GM23248 (cell line): ENCODE measurements at regions of chr17 and their contacts with region 1.

Region 1: DNA sequence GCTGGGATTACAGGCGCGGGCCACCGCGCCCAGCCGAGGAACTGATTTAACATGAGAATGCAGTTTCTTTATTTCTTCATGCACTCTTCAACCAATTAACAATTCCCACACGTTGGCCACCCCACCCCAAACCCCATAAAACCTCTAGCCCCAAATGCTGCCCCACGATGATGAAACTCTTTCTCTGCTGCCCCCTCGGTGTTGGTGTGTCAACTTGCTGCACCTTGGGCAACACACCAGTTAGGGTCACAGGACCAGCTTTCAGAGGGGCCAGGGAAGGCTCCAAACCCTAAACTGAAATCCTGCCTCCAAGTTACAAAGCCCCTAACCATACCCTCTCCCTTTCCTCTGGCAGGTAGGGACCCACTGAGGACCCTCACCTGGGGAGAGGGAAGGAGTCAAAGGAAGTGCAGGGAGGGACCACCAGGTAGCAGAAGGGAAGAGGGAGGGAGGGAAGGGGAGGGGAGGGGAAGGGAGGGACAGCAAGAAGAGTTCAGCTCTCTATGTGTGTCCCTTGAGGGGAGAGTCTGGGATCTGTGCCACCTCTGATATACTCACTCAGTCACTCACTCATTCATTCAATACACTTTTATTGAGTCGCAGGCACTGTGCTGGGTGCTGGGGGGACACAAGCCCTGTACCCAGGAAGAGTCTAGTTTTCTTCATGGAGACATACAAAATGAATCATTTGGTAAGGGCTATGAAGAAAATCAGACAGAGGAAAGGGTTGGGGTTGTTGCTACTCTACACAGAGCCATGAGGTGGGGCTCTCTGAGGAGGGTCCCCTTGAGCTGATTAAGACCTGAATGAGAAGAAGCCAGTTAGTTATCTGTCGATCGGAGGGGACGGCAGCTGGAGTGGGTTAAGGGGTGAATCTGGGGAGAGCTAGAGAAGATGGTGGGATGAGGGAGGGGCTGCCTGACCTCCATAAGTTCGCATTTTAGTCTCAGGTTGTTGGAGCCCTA is 3.9 kb downstream of the PLXDC1 start:
- DNase-seq: no peak
- H3K4me3 ChIP-seq: no peak overlapping the region
- H3K27ac ChIP-seq: no peak overlapping the region
- H3K4me1 ChIP-seq: peaks cover 11% of the 10 kb centered on the region; the same call in 1 of the 2 replicates
- H3K27me3 ChIP-seq: no peaks in the 10 kb centered on the region; the same call in 1 of the 2 replicates

Region 2: GRCh38 chr17:38685491-38685890 is 462.0 kb before region 1 on chr17:
- in situ Hi-C with region 1: no loop called
- DNase-seq: no peak
- H3K4me3 ChIP-seq: no peak overlapping the region
- H3K27ac ChIP-seq: no peak overlapping the region
- H3K4me1 ChIP-seq: peaks cover 11% of the 10 kb centered on the region
- H3K27me3 ChIP-seq: no peaks in the 10 kb centered on the region

Region 3: GRCh38 chr17:39073916-39074315 is 73.6 kb before region 1 on chr17:
- in situ Hi-C with region 1: loop called (anchors 5 kb)
- DNase-seq: no peak
- H3K4me3 ChIP-seq: no peak overlapping the region
- H3K27ac ChIP-seq: no peak overlapping the region
- H3K4me1 ChIP-seq: no peaks in the 10 kb centered on the region
- H3K27me3 ChIP-seq: peaks cover 3% of the 10 kb centered on the region